ENCODE measurements at regions of chr17 and their contacts with region 1.

Region 1: DNA sequence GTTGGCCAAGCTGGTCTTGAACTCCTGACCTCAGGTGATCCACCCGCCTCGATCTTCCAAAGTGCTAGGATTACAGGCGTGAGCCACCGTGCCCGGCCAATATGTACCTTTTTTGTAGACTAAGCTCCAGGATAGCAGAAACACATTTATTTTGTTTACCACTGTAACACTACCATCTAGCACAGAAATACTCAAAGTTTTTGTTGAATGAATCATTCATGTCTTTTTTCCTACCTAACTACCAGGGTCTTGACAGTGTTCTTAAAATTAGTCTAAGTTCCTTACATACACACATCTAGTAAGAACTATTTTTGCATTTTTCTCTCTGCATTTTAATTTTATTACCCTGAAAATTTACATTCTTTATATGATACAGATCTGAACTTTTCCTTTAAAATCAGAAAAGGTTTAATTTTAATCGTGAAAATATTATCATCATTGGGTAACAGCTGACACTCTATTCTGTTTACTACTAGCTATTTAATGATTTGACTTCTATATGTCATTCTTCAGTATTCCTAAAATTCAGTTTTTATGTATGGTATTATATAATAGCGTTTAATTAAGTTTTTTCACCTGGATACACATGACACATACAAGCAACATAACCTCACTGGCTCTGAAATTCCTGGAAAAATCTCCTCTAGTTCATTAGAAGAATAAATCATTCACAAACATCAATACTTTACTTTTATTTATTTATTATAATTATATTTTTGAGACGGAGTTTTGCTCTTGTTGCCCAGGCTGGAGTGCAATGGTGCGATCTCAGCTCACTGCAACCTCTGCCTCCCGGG is 44.2 kb downstream of the AKAP10 start:
- H3K4me3 Mint-ChIP-seq: no peak overlapping the region
- H3K27ac Mint-ChIP-seq: no peak overlapping the region
- H3K4me1 Mint-ChIP-seq: no peaks in the 10 kb centered on the region
- H3K27me3 Mint-ChIP-seq: no peaks in the 10 kb centered on the region

Region 2: GRCh38 chr17:19791918-19792550 is 141.4 kb before region 1 on chr17:
- intact Hi-C with region 1: loop called (anchors 5 kb)
- H3K4me3 Mint-ChIP-seq: no peak overlapping the region
- H3K27ac Mint-ChIP-seq: no peak overlapping the region
- H3K4me1 Mint-ChIP-seq: no peaks in the 10 kb centered on the region
- H3K27me3 Mint-ChIP-seq: no peaks in the 10 kb centered on the region